Activated CD4-positive, alpha-beta memory T cell treated with anti-CD3 and anti-CD28 coated beads, Interleukin-2, amount 10 ng/mL, durations not matched to agents 7 days and 5 days (primary cell): ENCODE measurements at regions of chr15 and their contacts with region 1.

Region 1: DNA sequence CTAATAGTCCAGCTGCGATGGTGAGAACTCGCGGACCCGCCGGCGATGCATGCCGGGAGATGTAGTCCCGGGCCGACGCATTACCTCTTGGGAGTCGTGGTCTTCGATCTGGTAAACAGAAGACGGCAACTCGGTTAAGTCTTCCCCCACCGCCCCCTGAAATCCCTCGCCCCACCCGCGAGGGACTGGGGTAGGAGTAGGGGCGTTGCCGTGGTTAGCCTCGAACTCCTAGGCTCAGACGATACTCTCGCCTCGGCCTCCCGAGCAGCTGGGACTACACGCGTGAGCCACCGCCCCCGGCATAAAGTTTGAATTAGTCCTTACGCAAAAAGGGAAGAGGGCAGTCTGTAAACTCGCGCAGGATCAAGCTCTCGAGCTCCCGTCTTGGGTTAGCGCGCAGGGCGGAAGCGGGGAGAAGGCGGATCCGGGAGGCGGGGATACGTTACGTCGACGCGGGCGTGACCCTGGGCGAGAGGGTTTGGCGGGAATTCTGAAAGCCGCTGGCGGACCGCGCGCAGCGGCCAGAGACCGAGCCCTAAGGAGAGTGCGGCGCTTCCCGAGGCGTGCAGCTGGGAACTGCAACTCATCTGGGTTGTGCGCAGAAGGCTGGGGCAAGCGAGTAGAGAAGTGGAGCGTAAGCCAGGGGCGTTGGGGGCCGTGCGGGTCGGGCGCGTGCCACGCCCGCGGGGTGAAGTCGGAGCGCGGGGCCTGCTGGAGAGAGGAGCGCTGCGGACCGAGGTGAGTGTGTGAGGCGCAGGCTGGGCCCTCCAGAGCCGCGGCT is at the start of gene RAD51:
- DNase-seq: peak; percentile 95
- H3K4me3 Mint-ChIP-seq: peak within 1 kb of the TSS; percentile 99
- H3K27ac Mint-ChIP-seq: peak within 1 kb of the TSS; percentile 100
- H3K4me1 Mint-ChIP-seq: peaks cover 46% of the 10 kb centered on the region
- H3K27me3 Mint-ChIP-seq: no peaks in the 10 kb centered on the region
- total RNA-seq, gene RAD51: 50.9 to 60.4 TPM

Region 2: DNA sequence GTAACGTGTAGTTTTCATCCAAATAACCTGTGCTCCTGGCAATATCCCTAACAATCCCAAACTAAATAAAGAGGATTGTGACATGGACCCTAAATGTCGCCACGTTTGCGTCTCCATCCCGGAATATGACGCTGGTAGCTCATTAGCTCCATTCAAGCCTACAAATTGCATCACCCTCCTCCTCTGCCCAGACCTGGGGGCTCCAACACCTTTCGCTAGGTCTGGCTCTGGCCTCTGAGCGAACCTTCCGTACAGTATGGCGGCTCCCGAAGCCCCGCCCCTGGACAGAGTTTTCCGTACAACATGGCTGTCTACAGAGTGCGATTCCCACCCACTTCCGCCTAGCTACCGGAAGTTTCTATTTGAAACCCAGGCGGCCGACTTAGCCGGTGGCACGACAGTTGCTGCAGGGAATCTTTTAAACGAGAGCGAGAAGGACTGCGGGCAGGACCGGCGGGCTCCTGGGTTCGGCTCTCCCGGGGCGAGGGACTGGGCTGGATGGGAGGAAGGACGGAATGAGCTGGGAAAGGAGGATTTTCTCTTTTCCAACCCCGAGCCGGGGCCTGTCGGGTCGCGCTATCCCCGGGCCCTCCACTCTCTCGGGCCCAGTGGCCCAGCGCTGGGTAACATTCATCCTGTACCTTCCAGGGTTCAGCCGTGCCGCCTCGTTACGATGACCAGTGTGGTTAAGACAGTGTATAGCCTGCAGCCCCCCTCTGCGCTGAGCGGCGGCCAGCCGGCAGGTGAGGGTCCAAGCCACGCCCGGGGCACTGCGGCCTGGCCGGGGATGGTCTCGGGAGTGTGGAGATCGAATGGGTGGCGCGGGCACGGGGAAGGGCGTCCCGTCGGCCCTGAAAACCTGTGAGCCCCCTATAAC is 312.1 kb before region 1 on chr15 and contains the start of gene KNSTRN:
- CTCF ChIA-PET with region 1: no interaction called
- POLR2A ChIA-PET with region 1: no interaction called
- DNase-seq: peak; percentile 94
- H3K4me3 Mint-ChIP-seq: peak within 1 kb of the TSS; percentile 98
- H3K27ac Mint-ChIP-seq: peak within 1 kb of the TSS; percentile 82
- H3K4me1 Mint-ChIP-seq: peaks cover 32% of the 10 kb centered on the region
- H3K27me3 Mint-ChIP-seq: peaks cover 5% of the 10 kb centered on the region
- total RNA-seq, gene KNSTRN: 54.2 to 54.3 TPM

Region 3: GRCh38 chr15:40564591-40565332 is 130.1 kb before region 1 on chr15 and contains the start of gene CCDC32:
- CTCF ChIA-PET with region 1: interaction called, 8 read pairs
- POLR2A ChIA-PET with region 1: interaction called, 21 read pairs
- DNase-seq: peak; percentile 97
- H3K4me3 Mint-ChIP-seq: peak within 1 kb of the TSS; percentile 90
- H3K27ac Mint-ChIP-seq: peak within 1 kb of the TSS; percentile 84
- H3K4me1 Mint-ChIP-seq: peaks cover 54% of the 10 kb centered on the region
- H3K27me3 Mint-ChIP-seq: peaks cover 3% of the 10 kb centered on the region
- total RNA-seq, gene CCDC32: 33.2 to 33.7 TPM

Region 4: DNA sequence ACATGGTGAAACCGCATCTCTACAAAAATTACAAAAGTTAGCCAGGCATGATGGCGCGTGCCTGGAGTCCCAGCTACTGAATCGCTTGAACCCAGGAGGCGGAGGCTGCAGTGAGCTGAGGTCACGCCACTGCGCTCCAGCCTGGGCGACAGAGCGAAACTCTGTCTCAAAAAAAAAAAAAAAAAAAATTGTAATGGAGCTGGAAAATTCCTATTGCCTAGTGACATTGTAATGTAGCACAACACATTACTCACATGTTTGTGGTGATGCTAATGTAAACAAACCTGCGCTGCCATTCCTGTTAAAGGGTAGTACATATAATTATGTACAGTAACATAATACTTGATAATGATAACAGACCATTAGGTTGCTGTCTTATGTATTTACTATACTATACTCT is 61.7 kb before region 1 on chr15:
- CTCF ChIA-PET with region 1: no interaction called
- POLR2A ChIA-PET with region 1: no interaction called
- DNase-seq: no peak
- H3K4me3 Mint-ChIP-seq: no peak overlapping the region
- H3K27ac Mint-ChIP-seq: no peak overlapping the region
- H3K4me1 Mint-ChIP-seq: no peaks in the 10 kb centered on the region
- H3K27me3 Mint-ChIP-seq: no peaks in the 10 kb centered on the region

Region 5: DNA sequence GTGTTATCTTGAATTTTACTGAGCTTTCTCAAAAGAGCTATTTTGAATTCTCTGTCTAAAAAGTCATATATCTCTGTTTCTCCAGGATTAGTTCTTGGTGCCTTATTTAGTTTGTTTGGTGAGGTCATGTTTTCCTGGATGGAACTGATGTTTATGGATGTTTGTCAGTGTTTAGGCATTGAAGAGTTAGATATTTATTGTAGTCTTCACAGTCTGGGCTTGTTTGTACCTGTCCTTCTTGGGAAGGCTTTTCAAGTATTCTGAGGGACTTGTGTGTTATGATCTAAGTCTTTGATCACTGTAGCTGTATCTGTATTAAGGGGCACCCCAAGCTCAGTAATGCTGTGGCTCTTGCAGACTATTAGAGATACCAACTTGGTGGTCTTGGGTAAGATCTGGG is 10.5 kb before region 1 on chr15:
- CTCF ChIA-PET with region 1: interaction called, 20 read pairs
- POLR2A ChIA-PET with region 1: interaction called, 14 read pairs
- DNase-seq: no peak
- H3K4me3 Mint-ChIP-seq: no peak overlapping the region
- H3K27ac Mint-ChIP-seq: no peak overlapping the region
- H3K4me1 Mint-ChIP-seq: peaks cover 2% of the 10 kb centered on the region
- H3K27me3 Mint-ChIP-seq: peaks cover 2% of the 10 kb centered on the region

Region 6: GRCh38 chr15:40731034-40731433 is 36.2 kb after region 1 on chr15:
- CTCF ChIA-PET with region 1: no interaction called
- POLR2A ChIA-PET with region 1: interaction called, 15 read pairs
- DNase-seq: no peak
- H3K4me3 Mint-ChIP-seq: no peak overlapping the region
- H3K27ac Mint-ChIP-seq: peak overlapping the region; percentile 4
- H3K4me1 Mint-ChIP-seq: no peaks in the 10 kb centered on the region
- H3K27me3 Mint-ChIP-seq: no peaks in the 10 kb centered on the region

Region 7: GRCh38 chr15:40754883-40755811 is 60.3 kb after region 1 on chr15 and contains the start of gene RMDN3:
- CTCF ChIA-PET with region 1: no interaction called
- POLR2A ChIA-PET with region 1: interaction called, 18 read pairs
- DNase-seq: peak; percentile 95
- H3K4me3 Mint-ChIP-seq: peak within 1 kb of the TSS; percentile 88
- H3K27ac Mint-ChIP-seq: peak within 1 kb of the TSS; percentile 95
- H3K4me1 Mint-ChIP-seq: peaks cover 31% of the 10 kb centered on the region
- H3K27me3 Mint-ChIP-seq: no peaks in the 10 kb centered on the region
- total RNA-seq, gene RMDN3: 28.4 to 30.5 TPM

Region 8: GRCh38 chr15:40769274-40770146 is 74.6 kb after region 1 on chr15 and contains the start of gene C15orf62:
- CTCF ChIA-PET with region 1: interaction called, 3 read pairs
- POLR2A ChIA-PET with region 1: interaction called, 36 read pairs
- DNase-seq: no peak
- H3K4me3 Mint-ChIP-seq: no peak within 1 kb of the TSS
- H3K27ac Mint-ChIP-seq: peak within 1 kb of the TSS; percentile 62
- H3K4me1 Mint-ChIP-seq: peaks cover 39% of the 10 kb centered on the region
- H3K27me3 Mint-ChIP-seq: no peaks in the 10 kb centered on the region
- total RNA-seq, gene C15orf62: 1.1 to 1.2 TPM

Region 9: DNA sequence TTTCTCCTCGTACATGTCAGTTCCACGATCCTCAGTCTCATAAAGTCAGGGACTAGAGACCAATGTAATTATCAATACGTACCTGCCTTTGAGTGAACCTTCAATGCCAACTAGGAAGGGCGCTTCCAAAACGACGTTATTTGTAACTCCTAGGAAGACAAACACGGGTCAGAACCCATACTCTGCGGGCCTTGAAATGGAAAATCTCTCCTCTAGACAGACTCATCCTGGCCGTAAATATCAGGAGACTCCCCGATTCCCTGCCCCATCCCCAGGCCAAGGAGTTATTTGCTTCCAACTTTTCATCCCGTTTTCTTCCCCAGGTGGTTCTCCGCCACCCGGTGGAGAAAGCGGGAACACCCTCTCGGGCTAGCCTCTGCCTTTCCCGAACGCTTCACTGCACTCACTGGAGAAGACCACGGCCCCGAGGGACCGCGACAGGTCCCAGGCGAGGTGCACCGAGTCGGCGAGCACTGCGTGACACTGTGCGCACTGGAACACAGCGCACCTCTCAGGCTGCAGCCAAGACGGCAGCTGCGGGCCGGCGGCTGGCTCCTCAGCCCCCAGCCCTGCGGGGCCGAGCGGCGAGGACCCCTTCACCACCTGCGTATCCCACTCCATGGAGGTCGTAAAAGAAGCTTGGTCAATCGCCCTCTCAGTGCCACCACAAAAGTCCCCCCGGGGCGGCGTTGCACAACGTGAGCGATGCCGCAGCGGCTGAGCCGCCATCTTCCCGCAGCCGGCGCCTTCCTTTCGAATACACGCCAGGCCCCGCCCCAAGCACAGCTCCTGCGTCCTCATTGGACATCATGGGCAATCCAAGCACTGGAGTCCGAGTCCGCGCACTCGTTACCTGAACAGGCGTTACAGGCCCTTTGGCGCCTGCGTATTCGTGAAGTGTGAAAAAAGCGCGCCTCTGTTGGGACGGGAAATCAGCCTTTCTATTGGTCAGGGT is 637.2 kb after region 1 on chr15 and contains the start of gene OIP5:
- CTCF ChIA-PET with region 1: no interaction called
- POLR2A ChIA-PET with region 1: interaction called, 17 read pairs
- DNase-seq: peak; percentile 99
- H3K4me3 Mint-ChIP-seq: peak within 1 kb of the TSS; percentile 95
- H3K27ac Mint-ChIP-seq: peak within 1 kb of the TSS; percentile 99
- H3K4me1 Mint-ChIP-seq: peaks cover 35% of the 10 kb centered on the region
- H3K27me3 Mint-ChIP-seq: no peaks in the 10 kb centered on the region
- total RNA-seq, gene OIP5: 15.2 to 15.4 TPM